ENCODE measurements at regions of chr1 and their contacts with region 1.

Region 1: GRCh38 chr1:33633019-33633801 is 160.8 kb downstream of the ZSCAN20 start:
- DNase-seq: peak; percentile 95
- ATAC-seq: peak; percentile 97
- H3K4me3 Mint-ChIP-seq: no peak overlapping the region
- H3K27ac Mint-ChIP-seq: no peak overlapping the region
- H3K4me1 Mint-ChIP-seq: no peaks in the 10 kb centered on the region
- H3K27me3 Mint-ChIP-seq: peaks cover 28% of the 10 kb centered on the region

Region 2: GRCh38 chr1:33610864-33611455 is 22.2 kb before region 1 on chr1:
- CTCF ChIA-PET with region 1: interaction called, 24 read pairs
- POLR2A ChIA-PET with region 1: no interaction called
- intact Hi-C with region 1: no loop called
- DNase-seq: no peak
- ATAC-seq: no peak
- H3K4me3 Mint-ChIP-seq: no peak overlapping the region
- H3K27ac Mint-ChIP-seq: no peak overlapping the region
- H3K4me1 Mint-ChIP-seq: peaks cover 3% of the 10 kb centered on the region
- H3K27me3 Mint-ChIP-seq: peaks cover 19% of the 10 kb centered on the region

Region 3: DNA sequence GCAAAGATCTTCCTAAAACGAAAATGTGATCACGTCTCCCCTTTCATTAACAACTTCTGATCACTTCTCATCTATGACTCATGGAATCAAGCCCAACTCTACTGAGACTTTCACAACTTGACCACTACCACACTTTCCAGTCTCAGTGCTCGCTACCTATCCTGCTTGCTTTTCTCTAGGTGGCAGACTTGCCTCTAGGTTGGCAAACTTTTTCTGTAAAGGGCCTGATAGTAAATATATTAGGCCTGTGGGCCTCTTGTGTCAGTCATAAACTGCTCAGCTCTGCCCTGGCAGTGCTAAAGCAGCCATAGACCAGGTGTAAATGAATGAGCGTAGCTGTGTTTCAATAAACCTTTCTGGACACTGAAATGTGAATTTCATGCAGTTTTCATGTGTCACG is 209.1 kb after region 1 on chr1:
- CTCF ChIA-PET with region 1: no interaction called
- POLR2A ChIA-PET with region 1: no interaction called
- intact Hi-C with region 1: no loop called
- DNase-seq: no peak
- ATAC-seq: no peak
- H3K4me3 Mint-ChIP-seq: no peak overlapping the region
- H3K27ac Mint-ChIP-seq: no peak overlapping the region
- H3K4me1 Mint-ChIP-seq: no peaks in the 10 kb centered on the region
- H3K27me3 Mint-ChIP-seq: peaks cover 2% of the 10 kb centered on the region

Region 4: DNA sequence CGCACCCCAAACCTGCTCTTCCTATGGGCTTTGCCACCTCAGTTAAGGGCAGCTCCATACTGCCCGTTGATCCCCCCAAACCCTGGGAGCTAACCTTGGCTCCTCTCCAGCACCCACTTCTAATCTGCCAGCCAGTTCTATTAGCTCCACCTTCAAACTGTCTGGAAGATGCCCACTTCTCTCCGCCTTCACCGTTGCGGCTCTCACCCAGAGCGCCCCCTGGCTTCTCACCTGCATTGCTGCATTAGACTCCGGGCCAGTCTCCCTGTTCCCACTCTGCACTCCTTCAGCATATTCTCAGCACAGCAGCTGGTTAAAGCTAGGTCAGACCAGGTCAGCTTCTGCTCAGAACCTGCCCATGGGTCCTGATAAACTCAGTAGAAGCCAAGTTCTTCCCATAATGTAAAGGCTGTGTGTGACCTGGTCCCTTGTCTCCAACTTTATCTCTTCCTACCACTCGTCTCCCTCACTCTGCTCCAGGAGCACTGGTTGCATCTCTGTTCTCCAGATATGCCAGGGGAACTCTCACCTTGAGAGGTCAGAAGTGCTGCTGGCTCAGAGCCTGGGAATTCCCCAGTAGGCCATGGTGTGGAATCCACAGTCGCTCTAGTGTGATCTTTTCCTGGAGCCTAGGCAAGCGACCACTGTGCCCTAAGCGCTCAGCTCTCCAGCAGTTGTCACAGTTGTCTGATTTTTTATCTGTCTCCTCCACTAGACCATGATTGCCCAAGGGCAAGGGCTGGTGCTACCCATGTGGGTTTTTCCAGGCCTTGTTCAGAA is 380.9 kb after region 1 on chr1:
- CTCF ChIA-PET with region 1: interaction called, 7 read pairs
- POLR2A ChIA-PET with region 1: no interaction called
- intact Hi-C with region 1: loop called in 1 of 2 experiments (anchors 2 kb)
- DNase-seq: peak; percentile 54
- ATAC-seq: no peak
- H3K4me3 Mint-ChIP-seq: no peak overlapping the region
- H3K27ac Mint-ChIP-seq: no peak overlapping the region
- H3K4me1 Mint-ChIP-seq: no peaks in the 10 kb centered on the region
- H3K27me3 Mint-ChIP-seq: peaks cover 19% of the 10 kb centered on the region

Region 5: GRCh38 chr1:34162852-34163766 is 529.9 kb after region 1 on chr1:
- CTCF ChIA-PET with region 1: no interaction called
- POLR2A ChIA-PET with region 1: no interaction called
- intact Hi-C with region 1: loop called in 1 of 2 experiments (anchors 1 kb)
- DNase-seq: peak; percentile 70
- ATAC-seq: peak; percentile 79
- H3K4me3 Mint-ChIP-seq: peak overlapping the region; percentile 33
- H3K27ac Mint-ChIP-seq: no peak overlapping the region
- H3K4me1 Mint-ChIP-seq: peaks cover 8% of the 10 kb centered on the region
- H3K27me3 Mint-ChIP-seq: peaks cover 55% of the 10 kb centered on the region

Region 6: DNA sequence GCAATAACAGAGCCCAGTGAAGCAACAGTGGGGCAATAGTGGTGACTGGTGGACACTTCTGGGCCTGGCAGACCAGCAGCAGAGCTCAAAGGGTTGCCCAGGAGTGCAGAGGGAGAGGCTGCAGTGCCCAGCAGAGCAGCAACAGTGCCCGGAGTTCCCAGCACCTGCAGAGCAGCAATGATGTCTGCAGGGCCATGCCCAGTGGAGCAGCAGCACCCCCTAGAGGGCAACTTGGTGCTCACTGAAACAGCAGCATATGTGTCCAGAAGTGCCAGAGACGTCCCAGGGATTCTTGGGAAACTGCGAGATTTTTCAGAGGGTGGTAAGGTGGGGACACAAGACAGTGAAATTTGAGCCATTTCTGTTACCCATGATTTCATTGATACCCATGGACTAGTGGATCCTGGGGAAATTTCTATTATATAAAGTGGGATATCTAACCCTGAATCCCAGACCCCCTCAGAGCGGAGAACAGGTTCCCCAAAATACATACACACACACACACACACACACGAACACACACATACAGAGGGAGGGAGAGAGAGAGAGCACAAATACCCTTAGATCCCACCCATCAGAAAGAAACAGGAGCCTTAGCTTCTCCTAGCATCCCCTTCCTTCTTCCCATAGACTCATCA is 964.8 kb after region 1 on chr1:
- CTCF ChIA-PET with region 1: no interaction called
- POLR2A ChIA-PET with region 1: no interaction called
- intact Hi-C with region 1: loop called (anchors 2 to 5 kb)
- DNase-seq: peak; percentile 84
- ATAC-seq: peak; percentile 60
- H3K4me3 Mint-ChIP-seq: no peak overlapping the region
- H3K27ac Mint-ChIP-seq: no peak overlapping the region
- H3K4me1 Mint-ChIP-seq: no peaks in the 10 kb centered on the region
- H3K27me3 Mint-ChIP-seq: peaks cover 6% of the 10 kb centered on the region

Region 7: GRCh38 chr1:34742667-34743270 is 1109.6 kb after region 1 on chr1:
- CTCF ChIA-PET with region 1: interaction called, 25 read pairs
- POLR2A ChIA-PET with region 1: no interaction called
- intact Hi-C with region 1: loop called (anchors 1 to 2 kb)
- DNase-seq: peak; percentile 91
- ATAC-seq: peak; percentile 98
- H3K4me3 Mint-ChIP-seq: no peak overlapping the region
- H3K27ac Mint-ChIP-seq: no peak overlapping the region
- H3K4me1 Mint-ChIP-seq: no peaks in the 10 kb centered on the region
- H3K27me3 Mint-ChIP-seq: no peaks in the 10 kb centered on the region